AG04449 (cell line): ENCODE measurements at regions of chr5 and their contacts with region 1.

Region 1: DNA sequence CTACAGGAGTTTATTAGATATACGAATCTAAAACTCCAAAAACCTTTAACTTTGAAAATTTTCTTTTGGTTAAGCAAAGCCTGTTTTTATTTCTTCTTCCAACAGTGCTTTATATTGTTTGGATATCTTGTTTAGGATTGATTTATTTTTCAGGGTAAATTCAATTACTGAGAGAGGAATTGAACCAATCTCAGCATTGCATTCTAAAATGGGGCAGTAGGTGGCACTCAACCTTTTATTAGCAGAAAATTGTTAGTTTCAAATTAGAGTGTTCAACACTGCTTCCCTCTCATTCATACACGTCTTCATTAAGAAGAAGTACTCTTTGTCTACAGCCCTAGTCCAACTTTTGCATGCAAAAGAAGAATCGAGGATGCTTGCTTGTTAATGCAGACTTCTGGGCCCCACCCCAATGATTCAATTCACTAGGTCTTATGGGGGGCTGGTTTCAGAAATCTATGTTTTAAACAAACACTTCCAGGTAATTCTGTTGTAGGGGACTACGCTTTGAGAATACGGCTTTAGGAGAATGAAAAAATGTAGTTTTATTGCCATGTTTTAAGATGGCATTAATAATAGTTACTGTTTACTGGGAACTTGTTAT is 26.6 kb downstream of the MRPL22 start:
- DNase-seq: no peak
- H3K4me3 ChIP-seq: no peak overlapping the region
- CTCF ChIP-seq: peak; percentile 43

Region 2: GRCh38 chr5:154818471-154819116 is 148.9 kb before region 1 on chr5:
- CTCF ChIA-PET with region 1: no interaction called
- POLR2A ChIA-PET with region 1: no interaction called
- DNase-seq: no peak
- H3K4me3 ChIP-seq: no peak overlapping the region
- CTCF ChIP-seq: no peak

Region 3: DNA sequence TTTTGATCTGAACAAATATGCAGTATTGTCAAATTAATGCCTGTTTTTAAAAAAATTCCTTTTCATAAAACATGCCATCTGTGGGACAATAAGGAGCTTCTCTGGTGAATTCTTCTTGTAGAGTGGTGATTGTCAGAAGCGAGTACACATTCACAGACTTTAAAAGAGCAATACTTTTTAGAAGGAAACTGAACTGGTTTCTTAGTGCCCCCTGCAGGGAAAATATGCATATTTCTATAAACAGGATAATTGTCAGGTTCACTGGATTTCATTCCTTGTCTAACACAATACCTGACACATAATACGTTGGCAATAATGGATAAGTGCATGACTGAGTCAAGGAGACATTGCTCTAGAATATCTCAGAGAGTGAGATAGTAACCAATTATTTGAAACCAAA is 179.7 kb after region 1 on chr5:
- CTCF ChIA-PET with region 1: interaction called, 123 read pairs
- POLR2A ChIA-PET with region 1: no interaction called
- DNase-seq: no peak
- H3K4me3 ChIP-seq: no peak overlapping the region
- CTCF ChIP-seq: no peak

Region 4: DNA sequence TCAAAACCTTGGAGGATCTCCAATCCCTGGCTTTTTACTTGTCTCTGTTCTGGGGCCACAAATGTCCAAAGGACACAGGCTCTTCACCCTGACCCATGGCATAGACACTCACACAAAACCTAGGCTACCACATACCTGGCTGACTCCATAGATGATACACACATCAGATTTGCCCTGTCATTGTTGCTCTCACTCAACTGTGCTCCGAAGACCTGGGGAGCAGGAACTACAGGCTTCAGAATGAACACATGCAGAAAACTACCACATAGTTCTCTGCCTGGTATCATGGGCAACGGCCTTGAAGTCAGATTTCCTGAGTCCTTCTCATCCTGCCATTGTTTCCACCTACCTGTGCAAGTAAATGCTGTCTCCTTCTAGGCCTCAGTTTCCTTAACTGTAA is 272.3 kb after region 1 on chr5:
- CTCF ChIA-PET with region 1: no interaction called
- POLR2A ChIA-PET with region 1: no interaction called
- DNase-seq: no peak
- H3K4me3 ChIP-seq: no peak overlapping the region
- CTCF ChIP-seq: no peak